Activated T-helper 2 cell treated with anti-CD3 and anti-CD28 coated beads, Interferon-gamma antibody, Interleukin-2, Interleukin-4, amounts not matched to agents 10 μg/mL and 5 μg/mL and 100 μg/mL, durations not matched to agents 14 hours and 24 hours and 36 hours (primary cell): ENCODE measurements at regions of chr7 and their contacts with region 1.

Region 1: GRCh38 chr7:104983578-104984539 is 30.1 kb upstream of the KMT2E start:
- DNase-seq: peak; percentile 82
- H3K4me3 Mint-ChIP-seq: peak overlapping the region; percentile 98
- H3K27ac Mint-ChIP-seq: peak overlapping the region; percentile 100
- H3K4me1 Mint-ChIP-seq: peaks cover 67% of the 10 kb centered on the region
- H3K27me3 Mint-ChIP-seq: no peaks in the 10 kb centered on the region

Region 2: DNA sequence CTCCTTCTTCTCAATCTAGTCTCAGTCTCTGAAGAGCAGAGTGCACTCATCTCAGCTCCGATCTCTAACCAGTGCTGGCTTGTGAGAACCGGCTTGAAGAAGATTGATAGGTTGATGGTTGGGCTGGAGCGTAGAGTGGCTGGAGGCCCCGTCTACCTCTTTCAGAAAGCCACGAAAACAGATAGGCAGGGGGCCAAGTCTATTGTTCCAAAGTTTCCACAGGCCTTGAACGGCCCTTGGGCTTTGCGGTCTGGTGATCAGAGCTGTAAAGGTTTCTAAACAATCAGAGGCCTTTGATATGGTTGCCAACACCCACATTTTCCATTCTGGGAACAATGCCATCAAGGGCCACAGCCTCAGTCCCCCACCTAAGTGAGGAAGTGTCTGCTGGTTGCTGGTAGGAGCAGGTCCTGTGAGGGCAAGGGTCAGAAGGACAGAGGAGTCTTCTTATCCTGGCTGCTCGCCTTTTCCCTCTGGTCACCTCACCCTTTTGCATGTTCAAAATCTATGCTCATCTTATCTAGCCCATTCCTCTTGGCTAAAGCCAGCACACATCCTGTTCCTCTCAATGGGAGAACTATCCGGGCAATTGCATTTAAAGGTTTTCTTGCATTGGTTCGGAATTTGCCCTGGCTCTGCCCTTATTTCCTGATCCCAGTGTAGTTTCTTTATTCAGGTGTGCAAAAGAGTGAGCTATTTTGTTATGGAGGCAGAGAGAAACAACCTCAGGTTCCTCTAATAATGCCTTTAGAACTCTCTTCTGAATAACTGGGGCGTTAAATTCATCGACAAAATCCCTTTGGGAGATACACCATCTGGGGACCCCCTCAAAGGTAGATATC is 40.1 kb before region 1 on chr7:
- intact Hi-C with region 1: loop called (anchors 1 kb)
- DNase-seq: peak; percentile 78
- H3K4me3 Mint-ChIP-seq: peak overlapping the region; percentile 97
- H3K27ac Mint-ChIP-seq: peak overlapping the region; percentile 99
- H3K4me1 Mint-ChIP-seq: peaks cover 50% of the 10 kb centered on the region
- H3K27me3 Mint-ChIP-seq: no peaks in the 10 kb centered on the region

Region 3: DNA sequence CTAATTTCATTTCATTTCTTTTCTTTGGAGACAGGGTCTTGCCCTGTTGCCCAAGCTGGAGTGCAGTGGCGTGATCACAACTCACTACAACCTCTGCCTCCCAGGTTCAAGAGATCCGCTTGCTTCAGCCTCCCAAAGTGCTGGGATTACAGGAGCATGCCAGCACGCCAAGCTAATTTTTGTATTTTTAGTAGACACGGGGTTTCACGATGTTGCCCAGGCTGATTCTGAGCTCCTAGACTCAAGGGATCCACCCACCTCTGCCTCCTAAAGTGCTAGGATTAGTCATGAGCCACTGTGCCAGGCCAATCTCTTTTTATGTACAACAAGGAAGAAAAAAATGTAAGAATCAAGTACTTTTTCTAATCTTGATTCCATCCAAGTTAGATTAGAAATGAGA is 19.4 kb after region 1 on chr7:
- intact Hi-C with region 1: loop called (anchors 1 kb)
- DNase-seq: no peak
- H3K4me3 Mint-ChIP-seq: peak overlapping the region; percentile 58
- H3K27ac Mint-ChIP-seq: peak overlapping the region; percentile 76
- H3K4me1 Mint-ChIP-seq: peaks cover 75% of the 10 kb centered on the region
- H3K27me3 Mint-ChIP-seq: no peaks in the 10 kb centered on the region

Region 4: DNA sequence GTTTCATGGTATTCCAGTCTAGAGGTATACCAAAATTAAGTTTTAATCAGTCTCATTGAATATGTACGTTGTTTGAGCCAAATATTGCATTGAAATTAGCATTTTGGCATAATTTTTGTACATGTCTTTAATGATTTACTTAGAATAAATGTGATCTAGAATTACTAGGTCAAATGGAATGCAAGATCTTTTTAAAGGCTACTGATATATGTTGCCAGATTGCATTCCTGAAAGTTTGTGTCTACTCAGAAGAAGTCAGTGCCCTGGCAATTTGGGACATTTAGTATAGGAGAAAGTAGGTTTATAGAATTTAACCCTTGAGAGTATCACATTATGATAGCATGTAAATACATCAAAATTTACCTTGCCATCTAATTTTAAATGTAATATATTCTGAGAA is 62.6 kb after region 1 on chr7:
- intact Hi-C with region 1: loop called (anchors 1 kb)
- DNase-seq: no peak
- H3K4me3 Mint-ChIP-seq: no peak overlapping the region
- H3K27ac Mint-ChIP-seq: no peak overlapping the region
- H3K4me1 Mint-ChIP-seq: peaks cover 22% of the 10 kb centered on the region
- H3K27me3 Mint-ChIP-seq: no peaks in the 10 kb centered on the region

Region 5: GRCh38 chr7:105098863-105099515 is 115.1 kb after region 1 on chr7:
- intact Hi-C with region 1: loop called (anchors 5 kb)
- DNase-seq: no peak
- H3K4me3 Mint-ChIP-seq: no peak overlapping the region
- H3K27ac Mint-ChIP-seq: peak overlapping the region; percentile 63
- H3K4me1 Mint-ChIP-seq: peaks cover 41% of the 10 kb centered on the region
- H3K27me3 Mint-ChIP-seq: no peaks in the 10 kb centered on the region